Naive thymus-derived CD4-positive, alpha-beta T cell (primary cell): ENCODE measurements at regions of chr12 and their contacts with region 1.

Region 1: GRCh38 chr12:92145731-92146496 is at the start of gene BTG1:
- DNase-seq: peak; percentile 90 to 100 (median 100)
- ATAC-seq: peak; percentile 84
- H3K4me3 ChIP-seq: peak within 1 kb of the TSS; percentile 98
- H3K4me3 Mint-ChIP-seq: peak within 1 kb of the TSS; percentile 94 to 100 (median 98)
- H3K27ac ChIP-seq: peak within 1 kb of the TSS; percentile 91
- H3K27ac Mint-ChIP-seq: peak within 1 kb of the TSS; percentile 98 to 100 (median 99)
- H3K4me1 ChIP-seq: peaks cover 7 to 14% of the 10 kb centered on the region in 2 donors
- H3K4me1 Mint-ChIP-seq: peaks cover 18 to 34% (median 27%) of the 10 kb centered on the region in 7 donors
- H3K27me3 ChIP-seq: no peaks in the 10 kb centered on the region
- H3K27me3 Mint-ChIP-seq: peaks cover 0 to 4% (median 0%) of the 10 kb centered on the region in 5 donors
- total RNA-seq, gene BTG1: 188 to 1,246 (median 571) TPM

Region 2: GRCh38 chr12:91811481-91812287 is 334.2 kb before region 1 on chr12:
- CTCF ChIA-PET with region 1: interaction called, 17 read pairs
- POLR2A ChIA-PET with region 1: interaction called, 57 read pairs
- intact Hi-C with region 1: loop called (anchors 1 kb)
- DNase-seq: peak; percentile 64 to 79 (median 70)
- ATAC-seq: peak; percentile 90
- H3K4me3 ChIP-seq: peak overlapping the region; percentile 37
- H3K4me3 Mint-ChIP-seq: peak overlapping the region in 9 of 10 donors; percentile 31 to 80 (median 52)
- H3K27ac ChIP-seq: peak overlapping the region; percentile 22
- H3K27ac Mint-ChIP-seq: peak overlapping the region in 8 of 9 donors; percentile 81 to 97 (median 86)
- H3K4me1 ChIP-seq: peaks cover 0 to 15% of the 10 kb centered on the region in 2 donors
- H3K4me1 Mint-ChIP-seq: peaks cover 10 to 48% (median 35%) of the 10 kb centered on the region in 7 donors
- H3K27me3 ChIP-seq: no peaks in the 10 kb centered on the region
- H3K27me3 Mint-ChIP-seq: no peaks in the 10 kb centered on the region

Region 3: GRCh38 chr12:92034858-92035401 is 111.0 kb before region 1 on chr12:
- CTCF ChIA-PET with region 1: interaction called, 23 read pairs
- POLR2A ChIA-PET with region 1: interaction called, 377 read pairs
- intact Hi-C with region 1: loop called in 1 of 2 experiments (anchors 1 kb)
- DNase-seq: peak; percentile 26 to 79 (median 71)
- ATAC-seq: peak; percentile 54
- H3K4me3 ChIP-seq: peak overlapping the region; percentile 52
- H3K4me3 Mint-ChIP-seq: peak overlapping the region; percentile 84 to 99 (median 91)
- H3K27ac ChIP-seq: peak overlapping the region; percentile 76
- H3K27ac Mint-ChIP-seq: peak overlapping the region; percentile 95 to 100 (median 99)
- H3K4me1 ChIP-seq: peaks cover 71 to 81% of the 10 kb centered on the region in 2 donors
- H3K4me1 Mint-ChIP-seq: peaks cover 49 to 100% (median 94%) of the 10 kb centered on the region in 7 donors
- H3K27me3 ChIP-seq: no peaks in the 10 kb centered on the region
- H3K27me3 Mint-ChIP-seq: no peaks in the 10 kb centered on the region

Region 4: DNA sequence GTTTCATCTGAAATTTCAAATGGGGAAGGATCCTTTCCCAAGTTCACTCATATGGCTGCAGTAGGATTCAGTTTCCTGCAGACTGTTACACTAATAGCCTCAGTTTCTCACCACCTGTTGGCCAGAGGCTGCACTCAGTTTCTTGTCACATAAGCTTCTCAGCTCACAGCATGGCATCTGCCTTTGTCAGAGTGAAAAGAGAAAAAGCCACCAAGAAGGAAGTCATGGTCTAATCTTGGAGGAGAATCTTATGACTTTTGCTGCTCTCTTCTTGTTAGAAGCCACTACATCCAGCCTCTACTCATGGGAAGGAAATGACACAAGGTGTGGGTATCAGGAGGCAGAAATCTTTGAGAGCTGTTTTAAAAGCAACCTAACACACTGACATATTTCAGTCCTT is 39.1 kb after region 1 on chr12:
- CTCF ChIA-PET with region 1: no interaction called
- POLR2A ChIA-PET with region 1: interaction called, 15 read pairs
- intact Hi-C with region 1: loop called (anchors 1 kb)
- DNase-seq: peak in 8 of 9 donors; percentile 30 to 70 (median 56)
- ATAC-seq: peak; percentile 88
- H3K4me3 ChIP-seq: no peak overlapping the region
- H3K4me3 Mint-ChIP-seq: peak overlapping the region; percentile 28 to 77 (median 68)
- H3K27ac ChIP-seq: peak overlapping the region; percentile 74
- H3K27ac Mint-ChIP-seq: peak overlapping the region; percentile 83 to 96 (median 93)
- H3K4me1 ChIP-seq: peaks cover 22 to 29% of the 10 kb centered on the region in 2 donors
- H3K4me1 Mint-ChIP-seq: peaks cover 23 to 71% (median 60%) of the 10 kb centered on the region in 7 donors
- H3K27me3 ChIP-seq: no peaks in the 10 kb centered on the region
- H3K27me3 Mint-ChIP-seq: no peaks in the 10 kb centered on the region

Region 5: GRCh38 chr12:92331383-92331782 is 185.5 kb after region 1 on chr12:
- CTCF ChIA-PET with region 1: no interaction called
- POLR2A ChIA-PET with region 1: interaction called, 16 read pairs
- intact Hi-C with region 1: no loop called
- DNase-seq: no peak
- ATAC-seq: no peak
- H3K4me3 ChIP-seq: no peak overlapping the region
- H3K4me3 Mint-ChIP-seq: no peak overlapping the region
- H3K27ac ChIP-seq: no peak overlapping the region
- H3K27ac Mint-ChIP-seq: peak overlapping the region in 1 of 9 donors; percentile 25
- H3K4me1 ChIP-seq: peaks cover 6 to 20% of the 10 kb centered on the region in 2 donors
- H3K4me1 Mint-ChIP-seq: peaks cover 17 to 75% (median 58%) of the 10 kb centered on the region in 7 donors
- H3K27me3 ChIP-seq: no peaks in the 10 kb centered on the region
- H3K27me3 Mint-ChIP-seq: no peaks in the 10 kb centered on the region

Region 6: GRCh38 chr12:92551853-92552397 is 406.0 kb after region 1 on chr12:
- CTCF ChIA-PET with region 1: no interaction called
- POLR2A ChIA-PET with region 1: interaction called, 28 read pairs
- intact Hi-C with region 1: no loop called
- DNase-seq: peak in 1 of 9 donors; percentile 51
- ATAC-seq: no peak
- H3K4me3 ChIP-seq: no peak overlapping the region
- H3K4me3 Mint-ChIP-seq: no peak overlapping the region
- H3K27ac ChIP-seq: no peak overlapping the region
- H3K27ac Mint-ChIP-seq: no peak overlapping the region
- H3K4me1 ChIP-seq: peaks cover 11 to 15% of the 10 kb centered on the region in 2 donors
- H3K4me1 Mint-ChIP-seq: peaks cover 21 to 32% (median 27%) of the 10 kb centered on the region in 7 donors
- H3K27me3 ChIP-seq: no peaks in the 10 kb centered on the region
- H3K27me3 Mint-ChIP-seq: no peaks in the 10 kb centered on the region